Left ventricle myocardium inferior (tissue), 1 donor: ENCODE measurements at regions of chr5 and their contacts with region 1.

Region 1: DNA sequence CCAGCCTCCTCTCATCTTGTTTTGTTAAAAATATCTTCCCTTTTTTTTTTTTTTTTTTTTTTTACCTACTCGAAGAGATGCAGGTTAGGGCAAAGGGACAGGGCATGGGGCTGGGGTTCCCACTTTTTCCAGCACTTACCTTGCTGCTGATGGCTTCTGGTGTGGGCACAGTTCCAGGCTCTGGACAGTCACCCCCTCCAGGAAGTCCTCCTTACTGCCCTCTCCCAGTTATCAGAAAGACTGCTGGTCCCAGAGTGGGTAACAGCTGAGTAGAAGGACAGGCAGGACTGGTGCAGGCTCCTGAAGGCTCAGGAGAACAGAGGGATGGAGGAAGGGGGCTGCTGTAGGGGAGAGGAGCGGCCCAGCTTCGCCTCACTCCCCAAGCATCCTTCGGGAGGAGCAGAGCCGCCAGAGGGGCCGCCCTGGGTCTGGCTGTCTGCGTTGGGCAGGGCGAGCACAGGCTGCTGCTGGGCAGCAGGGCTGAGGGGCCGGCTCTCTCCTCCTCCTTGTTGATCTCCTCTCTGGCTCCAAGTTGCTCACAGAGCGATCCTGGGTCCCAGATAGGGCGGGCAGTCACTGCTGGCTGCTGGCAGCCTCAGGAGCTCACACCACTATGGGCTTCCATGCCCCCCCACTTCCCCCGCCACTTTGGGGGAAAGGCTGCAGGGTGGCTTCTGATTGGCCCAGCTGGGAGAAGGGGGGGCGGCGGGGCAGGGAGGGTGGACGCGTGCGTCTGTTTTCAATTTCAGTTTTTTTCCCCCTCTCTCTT is at the start of gene PDGFRB:
- DNase-seq: peak; percentile 91
- H3K4me3 ChIP-seq: peak within 1 kb of the TSS; percentile 69
- H3K27ac ChIP-seq: peak within 1 kb of the TSS; percentile 89
- H3K4me1 ChIP-seq: peaks cover 46% of the 10 kb centered on the region
- H3K27me3 ChIP-seq: no peaks in the 10 kb centered on the region
- CTCF ChIP-seq: no peak
- total RNA-seq, gene PDGFRB: 39.7 TPM

Region 2: DNA sequence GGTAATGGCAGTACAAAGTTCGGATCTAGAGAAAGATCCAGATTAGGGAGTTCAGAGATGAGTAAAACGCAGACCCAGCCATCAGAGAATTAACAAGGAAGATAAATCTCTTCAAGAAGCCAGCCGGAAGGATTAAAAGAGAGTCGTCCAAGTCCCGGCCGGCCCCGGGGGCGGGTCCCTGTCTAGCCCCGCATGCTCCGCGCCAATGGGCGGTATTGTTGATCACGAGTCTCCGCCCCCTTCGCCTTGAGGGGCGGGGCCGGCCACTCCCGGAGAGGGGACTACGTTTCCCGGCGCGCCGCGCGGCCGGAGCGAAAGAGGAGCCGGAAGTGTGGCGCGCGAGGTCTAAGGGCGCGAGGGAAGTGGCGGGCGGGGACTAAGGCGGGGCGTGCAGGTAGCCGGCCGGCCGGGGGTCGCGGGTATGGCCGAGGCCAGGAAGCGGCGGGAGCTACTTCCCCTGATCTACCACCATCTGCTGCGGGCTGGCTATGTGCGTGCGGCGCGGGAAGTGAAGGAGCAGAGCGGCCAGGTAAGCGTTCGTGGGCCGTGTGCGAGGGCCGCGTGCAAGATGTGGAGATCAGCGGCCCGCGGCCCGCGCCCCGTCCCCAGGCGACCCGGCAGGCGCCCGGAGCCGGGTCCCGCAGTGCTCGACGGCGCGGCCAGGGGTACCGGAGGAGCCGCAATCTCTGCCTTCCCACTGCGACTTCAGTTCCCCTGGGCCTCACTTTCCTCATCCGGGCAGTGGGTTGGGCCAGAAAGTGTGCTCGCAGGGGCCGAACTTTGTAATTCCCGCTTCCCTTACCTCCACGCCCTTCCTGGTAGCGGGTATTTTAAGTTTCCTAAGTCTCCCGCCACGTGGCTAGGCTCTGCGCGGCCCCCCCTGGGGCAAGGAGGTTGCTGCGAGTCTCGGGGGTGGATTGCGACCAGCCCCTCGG is 202.2 kb after region 1 on chr5 and contains the start of gene TCOF1:
- intact Hi-C with region 1: loop called (anchors 10 kb)
- DNase-seq: peak; percentile 96
- H3K4me3 ChIP-seq: peak within 1 kb of the TSS; percentile 99
- H3K27ac ChIP-seq: peak within 1 kb of the TSS; percentile 73
- H3K4me1 ChIP-seq: peaks cover 25% of the 10 kb centered on the region
- H3K27me3 ChIP-seq: no peaks in the 10 kb centered on the region
- CTCF ChIP-seq: no peak
- total RNA-seq, gene TCOF1: 19.3 TPM